ENCODE measurements at regions of chr20 and their contacts with region 1.

Region 1: GRCh38 chr20:51639206-51639832 is 96.8 kb upstream of the NFATC2 start:
- DNase-seq: peak; percentile 79
- H3K4me3 Mint-ChIP-seq: no peak overlapping the region
- H3K27ac Mint-ChIP-seq: no peak overlapping the region
- H3K4me1 Mint-ChIP-seq: peaks cover 35% of the 10 kb centered on the region
- H3K27me3 Mint-ChIP-seq: peaks cover 7% of the 10 kb centered on the region

Region 2: DNA sequence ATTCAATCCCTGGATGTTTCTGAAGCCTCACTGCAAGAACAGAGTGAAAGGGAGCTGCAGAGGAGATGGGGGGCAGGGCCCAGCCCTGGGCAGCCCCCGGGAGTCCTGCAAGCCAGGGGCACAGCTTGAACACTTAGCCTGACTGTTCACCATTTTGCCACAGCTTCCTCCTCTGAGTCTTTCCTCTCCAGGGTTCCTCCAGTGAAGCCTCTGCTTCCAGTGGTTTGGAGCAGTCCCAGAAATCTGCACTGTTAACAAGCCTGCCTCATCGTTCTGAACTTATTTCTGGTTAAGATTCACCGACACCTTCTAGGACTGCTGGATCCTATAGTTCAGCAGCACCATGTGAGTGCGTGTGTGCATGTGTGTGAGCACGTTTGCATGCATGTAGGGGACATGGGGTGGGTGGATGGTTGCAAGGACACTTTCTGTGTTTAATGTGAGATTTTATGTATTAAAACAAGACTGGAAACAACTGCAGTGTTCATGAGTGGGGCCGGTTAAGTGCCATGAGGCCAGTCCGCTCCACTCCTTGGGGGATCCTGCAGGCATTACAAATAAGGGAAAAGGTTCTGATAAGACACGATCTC is 1424.1 kb before region 1 on chr20:
- CTCF ChIA-PET with region 1: no interaction called
- POLR2A ChIA-PET with region 1: no interaction called
- intact Hi-C with region 1: no loop called
- DNase-seq: no peak
- H3K4me3 Mint-ChIP-seq: no peak overlapping the region
- H3K27ac Mint-ChIP-seq: no peak overlapping the region
- H3K4me1 Mint-ChIP-seq: peaks cover 6% of the 10 kb centered on the region
- H3K27me3 Mint-ChIP-seq: peaks cover 15% of the 10 kb centered on the region

Region 3: GRCh38 chr20:51059862-51060261 is 579.5 kb before region 1 on chr20:
- CTCF ChIA-PET with region 1: no interaction called
- POLR2A ChIA-PET with region 1: no interaction called
- intact Hi-C with region 1: loop called (anchors 10 kb)
- DNase-seq: peak; percentile 17
- H3K4me3 Mint-ChIP-seq: no peak overlapping the region
- H3K27ac Mint-ChIP-seq: no peak overlapping the region
- H3K4me1 Mint-ChIP-seq: peaks cover 48% of the 10 kb centered on the region
- H3K27me3 Mint-ChIP-seq: peaks cover 27% of the 10 kb centered on the region

Region 4: GRCh38 chr20:51661609-51662178 is 22.4 kb after region 1 on chr20:
- CTCF ChIA-PET with region 1: interaction called, 3 read pairs
- POLR2A ChIA-PET with region 1: interaction called, 3 read pairs
- intact Hi-C with region 1: loop called (anchors 2 kb)
- DNase-seq: peak; percentile 65
- H3K4me3 Mint-ChIP-seq: no peak overlapping the region
- H3K27ac Mint-ChIP-seq: peak overlapping the region; percentile 29
- H3K4me1 Mint-ChIP-seq: peaks cover 22% of the 10 kb centered on the region
- H3K27me3 Mint-ChIP-seq: peaks cover 10% of the 10 kb centered on the region

Region 5: GRCh38 chr20:51695574-51696303 is 56.4 kb after region 1 on chr20:
- CTCF ChIA-PET with region 1: interaction called, 10 read pairs
- POLR2A ChIA-PET with region 1: no interaction called
- intact Hi-C with region 1: no loop called
- DNase-seq: peak; percentile 29
- H3K4me3 Mint-ChIP-seq: no peak overlapping the region
- H3K27ac Mint-ChIP-seq: no peak overlapping the region
- H3K4me1 Mint-ChIP-seq: peaks cover 12% of the 10 kb centered on the region
- H3K27me3 Mint-ChIP-seq: peaks cover 22% of the 10 kb centered on the region

Region 6: DNA sequence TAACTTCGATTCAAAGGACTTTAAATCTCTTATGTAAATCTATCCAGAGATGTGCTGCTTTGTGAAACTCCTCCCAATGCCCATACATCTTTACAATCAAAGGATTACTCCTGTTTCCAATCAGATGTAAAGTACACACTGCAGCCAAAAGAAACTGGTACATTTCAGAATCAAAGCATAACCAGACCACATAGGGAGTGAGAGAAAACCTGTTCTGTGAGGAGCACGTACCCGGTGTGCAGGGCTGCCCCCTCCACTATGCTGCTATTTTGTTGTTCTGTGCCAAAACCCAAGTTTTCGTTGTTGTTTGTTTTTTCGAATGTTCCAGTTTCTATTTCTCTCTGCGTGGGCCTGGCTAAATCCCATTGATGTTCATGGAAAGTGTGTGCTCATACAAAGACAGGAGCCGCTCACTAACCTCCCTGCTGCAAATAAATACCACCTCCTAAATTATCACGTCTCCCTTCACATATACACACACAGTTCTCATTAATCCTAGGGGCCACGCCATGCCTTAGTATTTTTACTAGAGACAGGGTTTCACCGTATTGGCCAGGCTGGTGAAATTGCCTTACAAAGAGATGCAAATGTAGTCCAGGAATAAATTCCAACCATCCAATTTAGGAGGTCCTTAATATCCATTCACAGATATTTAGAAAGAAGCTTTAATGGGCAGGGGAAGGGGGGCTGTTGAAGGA is 76.0 kb after region 1 on chr20:
- CTCF ChIA-PET with region 1: no interaction called
- POLR2A ChIA-PET with region 1: no interaction called
- intact Hi-C with region 1: loop called (anchors 2 kb)
- DNase-seq: no peak
- H3K4me3 Mint-ChIP-seq: no peak overlapping the region
- H3K27ac Mint-ChIP-seq: no peak overlapping the region
- H3K4me1 Mint-ChIP-seq: peaks cover 13% of the 10 kb centered on the region
- H3K27me3 Mint-ChIP-seq: peaks cover 26% of the 10 kb centered on the region

Region 7: GRCh38 chr20:51966291-51966971 is 327.1 kb after region 1 on chr20:
- CTCF ChIA-PET with region 1: interaction called, 4 read pairs
- POLR2A ChIA-PET with region 1: no interaction called
- intact Hi-C with region 1: loop called (anchors 2 kb)
- DNase-seq: peak; percentile 10
- H3K4me3 Mint-ChIP-seq: no peak overlapping the region
- H3K27ac Mint-ChIP-seq: no peak overlapping the region
- H3K4me1 Mint-ChIP-seq: no peaks in the 10 kb centered on the region
- H3K27me3 Mint-ChIP-seq: peaks cover 7% of the 10 kb centered on the region

Region 8: GRCh38 chr20:52083627-52084232 is 444.4 kb after region 1 on chr20:
- CTCF ChIA-PET with region 1: interaction called, 11 read pairs
- POLR2A ChIA-PET with region 1: no interaction called
- intact Hi-C with region 1: loop called (anchors 1 kb)
- DNase-seq: peak; percentile 59
- H3K4me3 Mint-ChIP-seq: no peak overlapping the region
- H3K27ac Mint-ChIP-seq: no peak overlapping the region
- H3K4me1 Mint-ChIP-seq: peaks cover 4% of the 10 kb centered on the region
- H3K27me3 Mint-ChIP-seq: no peaks in the 10 kb centered on the region